ENCODE measurements at regions of chr15 and their contacts with region 1.

Region 1: DNA sequence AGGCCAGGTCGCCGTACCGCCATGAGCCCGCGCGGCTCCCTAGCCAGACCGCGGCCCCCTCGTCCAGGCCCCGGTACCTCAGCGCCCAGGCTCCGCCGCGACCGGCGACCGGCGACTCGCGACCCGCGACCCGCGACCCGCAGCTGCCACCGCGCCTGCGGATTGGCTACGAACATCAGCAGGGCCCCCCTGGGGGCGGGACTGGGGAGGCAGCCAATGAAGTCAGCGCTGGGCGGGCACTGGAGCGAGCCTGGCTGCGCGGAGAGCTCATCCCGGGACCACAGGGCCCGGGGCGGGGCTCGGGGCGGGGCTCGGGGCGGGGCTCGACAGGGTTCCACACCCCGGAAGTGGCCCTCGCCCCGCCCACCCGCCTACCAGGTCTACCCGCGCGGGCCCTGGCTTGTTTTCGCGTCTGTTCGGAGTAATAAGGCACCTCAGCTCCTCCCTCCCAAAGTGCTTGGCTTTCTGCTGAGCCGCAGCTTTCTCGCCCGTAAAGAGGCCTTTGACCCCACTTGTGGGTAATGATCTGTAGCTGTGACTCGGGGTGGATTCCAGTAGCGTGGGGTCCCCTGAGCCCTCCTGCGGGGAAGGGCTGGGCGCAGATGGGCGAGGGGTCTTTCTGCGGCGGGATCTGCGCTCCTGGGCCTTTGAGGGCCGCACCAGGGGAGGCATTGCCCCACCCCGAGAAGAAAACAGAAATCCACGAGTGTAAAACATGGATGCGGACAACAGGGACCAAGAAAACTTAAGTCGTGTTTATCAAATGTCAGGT is at the start of gene LYSMD4:
- DNase-seq: peak; percentile 89
- ATAC-seq: peak; percentile 97
- H3K4me3 ChIP-seq: peak within 1 kb of the TSS; percentile 75 to 92 (median 84)
- H3K27ac ChIP-seq: peak within 1 kb of the TSS; percentile 89
- H3K4me1 ChIP-seq: peaks cover 59% of the 10 kb centered on the region
- H3K27me3 ChIP-seq: no peaks in the 10 kb centered on the region; a peak in 1 of 5 replicates
- CTCF ChIP-seq: no peak; the same call in 1 of the 2 replicates
- EP300 ChIP-seq: no peak
- POLR2A ChIP-seq: peak; percentile 76 to 79
- RAD21 ChIP-seq: no peak
- total RNA-seq, gene LYSMD4: 5.6 and 8.5 TPM in 2 replicates

Region 2: GRCh38 chr15:99197856-99198255 is 535.6 kb before region 1 on chr15:
- CTCF ChIA-PET with region 1: no interaction called
- POLR2A ChIA-PET with region 1: no interaction called
- in situ Hi-C with region 1: no loop called
- intact Hi-C with region 1: no loop called
- DNase-seq: no peak
- ATAC-seq: no peak
- H3K4me3 ChIP-seq: no peak overlapping the region
- H3K27ac ChIP-seq: no peak overlapping the region
- H3K4me1 ChIP-seq: peaks cover 7% of the 10 kb centered on the region; the same call in 1 of the 2 replicates
- H3K27me3 ChIP-seq: no peaks in the 10 kb centered on the region
- CTCF ChIP-seq: no peak
- EP300 ChIP-seq: no peak
- POLR2A ChIP-seq: no peak
- RAD21 ChIP-seq: no peak

Region 3: DNA sequence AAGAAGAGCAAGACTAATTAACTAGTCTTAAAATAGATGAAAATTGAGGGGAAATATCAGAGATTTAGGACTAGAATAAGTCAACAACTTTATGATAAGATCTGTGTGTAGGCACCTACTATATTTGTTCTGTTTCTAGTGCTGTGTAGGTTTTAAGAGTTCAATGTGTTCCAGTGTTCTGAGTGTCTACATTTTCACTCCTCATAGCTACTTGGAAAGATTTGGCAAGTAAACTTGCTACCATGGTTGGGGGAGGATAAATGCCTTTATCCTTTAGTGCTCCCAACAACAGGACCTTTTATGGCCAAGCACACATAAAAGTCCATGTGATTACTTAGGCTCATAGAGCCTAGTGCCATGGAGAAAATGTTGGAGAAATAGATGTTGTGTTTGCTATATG is 64.2 kb before region 1 on chr15:
- CTCF ChIA-PET with region 1: no interaction called
- POLR2A ChIA-PET with region 1: interaction called, 10 read pairs
- in situ Hi-C with region 1: no loop called
- intact Hi-C with region 1: no loop called
- DNase-seq: peak; percentile 53
- ATAC-seq: peak; percentile 65
- H3K4me3 ChIP-seq: no peak overlapping the region
- H3K27ac ChIP-seq: peak overlapping the region; percentile 54
- H3K4me1 ChIP-seq: peaks cover 28% of the 10 kb centered on the region
- H3K27me3 ChIP-seq: no peaks in the 10 kb centered on the region
- CTCF ChIP-seq: no peak
- EP300 ChIP-seq: no peak
- POLR2A ChIP-seq: no peak
- RAD21 ChIP-seq: no peak

Region 4: GRCh38 chr15:99719096-99719541 is 14.3 kb before region 1 on chr15:
- CTCF ChIA-PET with region 1: no interaction called
- POLR2A ChIA-PET with region 1: interaction called, 10 read pairs
- in situ Hi-C with region 1: no loop called
- intact Hi-C with region 1: no loop called
- DNase-seq: no peak
- ATAC-seq: no peak
- H3K4me3 ChIP-seq: no peak overlapping the region
- H3K27ac ChIP-seq: no peak overlapping the region
- H3K4me1 ChIP-seq: peaks cover 15% of the 10 kb centered on the region
- H3K27me3 ChIP-seq: no peaks in the 10 kb centered on the region
- CTCF ChIP-seq: no peak
- EP300 ChIP-seq: no peak
- POLR2A ChIP-seq: no peak
- RAD21 ChIP-seq: no peak

Region 5: DNA sequence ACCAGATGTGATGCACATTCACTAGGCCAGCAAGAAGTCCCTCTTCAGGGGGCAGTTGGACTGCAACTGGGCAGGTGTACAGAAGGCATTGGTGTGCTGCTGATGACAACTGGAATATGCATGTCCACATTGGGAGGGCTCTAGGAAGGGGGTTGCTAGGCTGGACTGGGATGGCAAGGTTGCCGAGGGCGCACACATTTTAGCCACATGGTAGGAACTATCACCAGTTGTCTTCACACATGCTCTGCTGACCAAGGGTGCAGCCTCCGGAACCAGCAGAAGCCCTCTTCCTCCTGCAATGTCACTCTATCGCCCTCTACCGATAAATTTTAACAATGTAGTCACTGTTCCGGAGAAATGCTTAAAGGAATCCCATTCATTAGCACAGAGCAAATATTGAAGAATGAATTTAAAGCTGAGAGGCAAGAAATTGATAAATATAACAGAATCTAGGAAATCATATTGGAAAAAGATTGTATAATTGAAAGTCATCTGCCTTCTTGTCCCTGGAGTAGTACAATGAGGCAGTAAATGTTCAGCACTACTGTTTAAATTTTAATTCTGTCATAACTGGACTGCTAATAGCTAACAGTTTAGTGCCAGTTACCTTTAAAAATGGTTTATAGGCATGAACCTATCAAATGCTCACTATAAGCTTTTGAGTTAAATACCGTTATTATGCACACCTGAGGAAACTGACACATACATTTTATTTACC is 22.4 kb after region 1 on chr15:
- CTCF ChIA-PET with region 1: no interaction called
- POLR2A ChIA-PET with region 1: interaction called, 12 read pairs
- in situ Hi-C with region 1: no loop called
- intact Hi-C with region 1: no loop called
- DNase-seq: peak; percentile 74
- ATAC-seq: peak; percentile 91
- H3K4me3 ChIP-seq: no peak overlapping the region
- H3K27ac ChIP-seq: no peak overlapping the region
- H3K4me1 ChIP-seq: peaks cover 26% of the 10 kb centered on the region
- H3K27me3 ChIP-seq: peaks cover 0 to 3% of the 10 kb centered on the region in 2 experiments; a peak in 1 of 5 replicates
- CTCF ChIP-seq: peak; percentile 88
- EP300 ChIP-seq: no peak
- POLR2A ChIP-seq: no peak
- RAD21 ChIP-seq: peak; percentile 67; the same call in 1 of the 2 replicates

Region 6: GRCh38 chr15:99931703-99932603 is 198.5 kb after region 1 on chr15:
- CTCF ChIA-PET with region 1: no interaction called
- POLR2A ChIA-PET with region 1: no interaction called
- in situ Hi-C with region 1: no loop called
- intact Hi-C with region 1: no loop called
- DNase-seq: no peak
- ATAC-seq: no peak
- H3K4me3 ChIP-seq: no peak overlapping the region
- H3K27ac ChIP-seq: no peak overlapping the region
- H3K4me1 ChIP-seq: peaks cover 8% of the 10 kb centered on the region; the same call in 1 of the 2 replicates
- H3K27me3 ChIP-seq: peaks cover 3 to 24% of the 10 kb centered on the region in 2 experiments
- CTCF ChIP-seq: no peak
- EP300 ChIP-seq: no peak
- POLR2A ChIP-seq: no peak
- RAD21 ChIP-seq: no peak

Measured in HepG2 (cell line).